Sciatic nerve (tissue), 2 donors: ENCODE measurements at regions of chr5 and their contacts with region 1.

Region 1: GRCh38 chr5:167442922-167443321 is 848.5 kb upstream of the WWC1 start:
- DNase-seq: no peak
- ATAC-seq: no peak

Region 2: GRCh38 chr5:167426501-167426900 is 16.4 kb before region 1 on chr5:
- intact Hi-C with region 1: loop called (anchors 2 kb)
- DNase-seq: no peak
- ATAC-seq: no peak